GM10248 (cell line): ENCODE measurements at regions of chr1 and their contacts with region 1.

Region 1: DNA sequence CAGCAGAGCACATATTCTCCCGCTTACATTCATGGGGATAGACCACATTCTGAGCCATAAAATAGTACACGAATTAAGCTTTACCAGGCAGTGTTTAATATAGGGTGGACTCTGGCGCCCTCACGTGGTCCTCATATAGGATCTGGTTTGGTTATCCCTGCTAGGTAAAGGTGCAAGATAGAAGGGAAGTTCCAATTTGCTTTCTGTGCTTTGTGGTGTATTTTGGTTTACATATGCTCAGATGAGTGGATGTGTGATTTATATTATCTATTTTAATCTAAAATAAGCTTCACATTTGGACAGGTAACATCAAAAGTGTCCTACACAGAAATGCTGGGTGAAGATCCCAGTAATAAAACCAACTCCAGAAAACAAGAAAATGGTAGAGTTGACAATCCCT is 3.6 kb downstream of the CR1 start:
- DNase-seq: peak; percentile 46
- CTCF ChIP-seq: peak; percentile 82

Region 2: GRCh38 chr1:207084701-207085180 is 414.8 kb before region 1 on chr1:
- CTCF ChIA-PET with region 1: interaction called, 16 read pairs
- POLR2A ChIA-PET with region 1: no interaction called
- DNase-seq: peak; percentile 65
- CTCF ChIP-seq: peak; percentile 66

Region 3: DNA sequence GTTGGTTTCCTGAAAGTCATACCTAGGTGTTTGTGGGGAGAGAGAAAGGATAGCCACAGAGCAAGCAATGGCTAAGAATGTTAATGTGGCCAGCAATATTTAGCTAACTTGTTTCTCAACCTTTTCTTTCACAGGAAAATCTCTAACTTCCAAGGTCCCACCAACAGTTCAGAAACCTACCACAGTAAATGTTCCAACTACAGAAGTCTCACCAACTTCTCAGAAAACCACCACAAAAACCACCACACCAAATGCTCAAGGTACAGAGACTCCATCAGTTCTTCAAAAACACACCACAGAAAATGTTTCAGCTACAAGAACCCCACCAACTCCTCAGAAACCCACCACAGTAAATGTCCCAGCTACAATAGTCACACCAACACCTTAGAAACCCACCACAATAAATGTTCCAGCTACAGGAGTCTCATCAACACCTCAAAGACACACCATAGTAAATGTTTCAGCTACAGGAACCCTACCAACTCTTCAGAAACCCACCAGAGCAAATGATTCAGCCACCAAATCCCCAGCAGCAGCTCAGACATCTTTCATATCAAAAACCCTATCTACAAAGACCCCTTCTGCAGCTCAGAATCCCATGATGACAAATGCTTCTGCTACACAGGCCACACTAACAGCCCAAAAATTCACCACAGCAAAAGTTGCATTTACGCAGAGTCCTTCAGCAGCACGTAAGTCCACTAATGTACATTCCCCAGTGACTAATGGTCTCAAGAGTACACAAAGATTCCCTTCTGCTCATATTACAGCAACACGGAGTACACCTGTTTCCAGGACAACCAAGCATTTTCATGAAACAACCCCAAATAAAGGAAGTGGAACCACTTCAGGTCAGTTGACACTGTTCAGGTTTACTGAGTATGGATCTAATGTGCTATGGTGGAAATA is 162.8 kb before region 1 on chr1:
- CTCF ChIA-PET with region 1: interaction called, 12 read pairs
- POLR2A ChIA-PET with region 1: no interaction called
- DNase-seq: peak; percentile 41
- CTCF ChIP-seq: no peak

Region 4: GRCh38 chr1:207454046-207454964 is 45.3 kb before region 1 on chr1 and contains the start of gene CR2:
- CTCF ChIA-PET with region 1: interaction called, 21 read pairs
- POLR2A ChIA-PET with region 1: interaction called, 7 read pairs
- DNase-seq: peak; percentile 83
- CTCF ChIP-seq: peak; percentile 56

Region 5: DNA sequence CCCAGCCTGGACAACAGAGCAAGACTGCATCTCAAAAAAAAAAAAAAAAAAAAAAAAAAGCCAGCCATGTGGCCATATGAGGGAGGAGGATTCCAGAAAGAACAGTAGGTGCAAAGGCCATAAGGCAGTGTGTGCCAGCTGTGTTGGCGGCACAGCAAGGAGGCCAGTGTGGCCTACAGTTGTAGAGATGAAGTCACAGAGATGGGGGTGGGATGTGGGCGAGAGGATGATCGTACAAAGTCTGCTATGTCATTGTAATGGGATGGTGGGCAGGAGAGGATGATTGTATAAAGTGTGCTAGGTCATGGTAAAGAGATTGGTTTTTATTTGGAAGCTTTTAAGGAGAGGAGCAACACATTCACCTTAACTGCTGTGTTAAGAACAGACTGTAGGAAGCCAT is 13.4 kb before region 1 on chr1:
- CTCF ChIA-PET with region 1: interaction called, 25 read pairs
- POLR2A ChIA-PET with region 1: no interaction called
- DNase-seq: no peak
- CTCF ChIP-seq: no peak

Region 6: DNA sequence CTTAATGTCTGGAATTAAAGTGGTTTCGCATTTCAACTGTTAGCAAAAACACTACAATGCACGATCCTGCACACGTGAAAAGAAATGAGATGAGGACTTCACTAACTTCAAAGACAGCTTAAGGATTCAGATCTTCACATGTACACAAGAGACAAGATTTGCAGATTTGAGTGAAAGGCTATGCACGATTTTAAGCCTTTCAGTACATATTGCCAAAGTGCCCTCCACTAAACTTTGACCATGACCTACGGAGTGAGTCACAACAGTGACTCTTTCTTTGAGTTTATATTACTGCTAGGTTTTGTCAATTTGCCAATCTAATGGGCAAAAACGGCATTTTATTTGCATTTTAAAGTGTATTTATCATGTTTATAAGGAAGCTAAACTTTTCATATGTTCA is 104.2 kb after region 1 on chr1:
- CTCF ChIA-PET with region 1: no interaction called
- POLR2A ChIA-PET with region 1: no interaction called
- DNase-seq: no peak
- CTCF ChIP-seq: no peak